Right lobe of liver (tissue), 6 donors: ENCODE measurements at regions of chr14 and their contacts with region 1.

Region 1: GRCh38 chr14:65824285-65824977 is 411.9 kb downstream of the FUT8 start:
- DNase-seq: peak in 1 of 3 donors; percentile 51
- ATAC-seq: peak; percentile 91 to 97 (median 94)
- H3K4me3 ChIP-seq: no peak overlapping the region
- H3K27ac ChIP-seq: no peak overlapping the region
- H3K4me1 ChIP-seq: no peaks in the 10 kb centered on the region
- H3K27me3 ChIP-seq: no peaks in the 10 kb centered on the region
- CTCF ChIP-seq: peak; percentile 88 to 94 (median 90)
- POLR2A ChIP-seq: no peak

Region 2: DNA sequence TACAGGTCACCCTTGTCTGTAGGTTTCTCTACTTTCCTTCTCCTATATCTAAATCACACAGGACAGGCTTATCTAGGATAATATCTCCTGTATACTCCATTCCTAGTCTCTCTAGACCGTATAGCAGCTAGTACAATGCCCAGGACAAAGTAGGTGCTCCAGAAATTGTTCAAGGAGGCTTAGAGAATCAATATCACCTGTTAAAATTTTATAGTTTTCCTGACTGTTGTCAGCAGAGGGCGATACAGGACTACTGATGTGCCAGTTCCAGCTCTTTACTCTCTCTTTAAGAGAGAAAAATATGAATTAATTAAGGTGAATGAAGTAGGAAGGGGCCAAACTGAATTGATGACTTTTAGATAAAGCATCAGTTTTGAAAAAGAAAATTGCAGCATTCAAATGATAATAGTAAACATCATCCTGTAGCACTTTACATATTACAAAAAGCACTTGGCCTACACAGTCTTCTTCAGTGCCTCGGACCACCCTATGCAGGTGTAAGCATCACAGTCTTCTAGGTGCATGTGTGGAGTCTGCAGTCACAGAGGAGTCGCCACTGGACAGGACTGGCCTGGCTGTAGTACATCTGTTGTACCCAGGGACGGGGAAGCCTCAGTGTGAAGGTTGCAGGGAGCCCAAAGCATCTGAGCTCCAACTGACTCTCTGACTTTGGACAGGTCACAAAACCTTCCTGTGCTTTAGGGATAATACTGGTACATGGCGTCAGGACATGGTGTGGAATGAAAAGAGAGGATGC is 660.2 kb before region 1 on chr14:
- intact Hi-C with region 1: loop called (anchors 10 kb)
- DNase-seq: no peak
- ATAC-seq: peak; percentile 64 to 73 (median 68)
- H3K4me3 ChIP-seq: no peak overlapping the region
- H3K27ac ChIP-seq: no peak overlapping the region
- H3K4me1 ChIP-seq: no peaks in the 10 kb centered on the region
- H3K27me3 ChIP-seq: no peaks in the 10 kb centered on the region
- CTCF ChIP-seq: peak; percentile 54 to 72 (median 62)
- POLR2A ChIP-seq: no peak

Region 3: GRCh38 chr14:65392296-65392695 is 432.1 kb before region 1 on chr14:
- intact Hi-C with region 1: no loop called
- DNase-seq: no peak
- ATAC-seq: no peak
- H3K4me3 ChIP-seq: no peak overlapping the region
- H3K27ac ChIP-seq: no peak overlapping the region
- H3K4me1 ChIP-seq: no peaks in the 10 kb centered on the region
- H3K27me3 ChIP-seq: no peaks in the 10 kb centered on the region
- CTCF ChIP-seq: no peak
- POLR2A ChIP-seq: no peak

Region 4: DNA sequence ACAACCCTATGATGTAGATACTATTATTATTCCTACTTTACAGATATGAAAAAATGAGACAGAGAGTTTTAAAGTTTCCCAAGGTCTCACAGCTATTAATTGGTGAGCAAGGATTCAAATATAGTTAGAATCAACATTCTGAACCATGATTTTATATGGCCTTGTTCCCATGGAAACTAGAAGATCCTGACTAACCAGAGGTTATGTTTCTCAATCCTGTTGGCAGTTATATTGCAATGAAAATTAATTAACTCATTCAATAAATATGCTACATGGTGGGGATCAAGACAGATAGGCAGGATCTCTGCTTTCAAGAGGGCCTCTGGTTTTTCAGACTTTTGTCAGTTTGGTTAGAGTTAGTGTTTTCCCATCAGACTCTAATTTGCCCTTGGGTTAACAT is 421.2 kb before region 1 on chr14:
- intact Hi-C with region 1: loop called in 1 of 2 experiments (anchors 10 kb)
- DNase-seq: no peak
- ATAC-seq: no peak
- H3K4me3 ChIP-seq: no peak overlapping the region
- H3K27ac ChIP-seq: no peak overlapping the region
- H3K4me1 ChIP-seq: no peaks in the 10 kb centered on the region
- H3K27me3 ChIP-seq: no peaks in the 10 kb centered on the region
- CTCF ChIP-seq: no peak
- POLR2A ChIP-seq: no peak

Region 5: DNA sequence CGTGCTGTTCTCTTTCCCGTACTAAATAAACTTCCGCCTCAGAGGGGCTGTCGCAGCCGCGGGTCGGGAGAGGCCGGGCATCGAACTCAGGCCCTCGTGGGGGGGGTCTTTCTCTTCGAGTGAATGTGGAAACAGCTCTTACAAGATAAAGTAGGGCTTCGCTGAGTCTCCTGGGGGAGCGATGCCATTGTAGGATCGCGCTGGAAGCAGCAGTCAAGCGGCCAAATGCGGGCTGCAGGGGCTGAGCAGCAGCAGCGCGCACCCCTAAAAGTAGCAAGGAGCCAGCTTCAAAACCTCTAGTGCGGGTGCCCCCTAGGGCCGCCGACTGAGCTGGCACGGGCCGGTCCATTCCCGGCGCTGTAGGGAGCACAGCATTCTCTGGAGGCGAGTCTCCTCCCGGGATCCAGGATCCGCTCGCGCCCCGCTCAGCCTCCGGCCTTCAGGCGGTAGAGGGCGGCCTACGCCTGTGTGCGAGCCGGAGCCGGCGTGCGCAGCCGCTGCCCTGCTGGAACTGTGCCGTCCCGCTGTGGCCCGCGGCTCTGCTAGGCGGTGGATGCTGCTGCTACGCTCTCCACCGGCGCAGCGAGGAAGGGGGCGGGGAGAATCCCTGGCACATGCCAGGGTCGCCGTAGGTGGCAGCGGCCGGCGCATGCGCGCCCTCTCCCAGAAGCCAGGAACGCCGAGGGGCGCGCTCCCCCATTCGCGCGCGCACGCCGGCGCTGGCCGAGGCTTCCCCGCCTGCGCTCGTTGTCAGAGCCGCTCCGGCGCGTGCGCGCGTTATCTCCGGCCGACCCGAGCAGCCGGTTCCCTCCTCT is 412.2 kb before region 1 on chr14 and contains the start of gene FUT8:
- intact Hi-C with region 1: loop called (anchors 10 kb)
- DNase-seq: peak; percentile 97 to 98 (median 97)
- ATAC-seq: peak; percentile 90 to 95 (median 92)
- H3K4me3 ChIP-seq: peak within 1 kb of the TSS; percentile 64 to 80 (median 71)
- H3K27ac ChIP-seq: peak within 1 kb of the TSS; percentile 69 to 79 (median 70)
- H3K4me1 ChIP-seq: peaks cover 0 to 3% (median 0%) of the 10 kb centered on the region in 4 donors
- H3K27me3 ChIP-seq: no peaks in the 10 kb centered on the region
- CTCF ChIP-seq: peak; percentile 48 to 69 (median 56)
- POLR2A ChIP-seq: peak; percentile 83
- total RNA-seq, gene FUT8: 2.6 to 4.9 (median 3.5) TPM